ENCODE measurements at regions of chr18 and their contacts with region 1.

Region 1: GRCh38 chr18:4587204-4587603 is 132.1 kb upstream of the DLGAP1 start:
- DNase-seq: no peak

Region 2: DNA sequence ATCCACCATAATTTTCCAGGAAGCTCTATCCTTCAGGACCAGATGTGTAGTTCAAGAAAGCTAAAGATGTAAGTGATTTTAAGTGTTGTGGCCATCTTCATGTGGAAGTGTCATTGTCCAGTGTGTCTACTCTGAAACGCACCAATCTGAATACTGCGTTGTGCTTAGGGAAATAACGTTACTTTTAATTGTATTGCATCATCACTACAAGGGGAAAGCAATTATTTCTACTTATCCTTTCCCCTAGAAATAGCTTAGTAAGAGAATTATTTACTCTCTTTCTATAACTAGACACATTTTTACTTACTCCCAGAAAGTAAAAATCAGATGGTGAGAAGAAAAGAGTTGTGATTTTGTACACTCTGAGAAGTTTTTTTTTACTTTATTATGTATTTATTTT is 29.7 kb before region 1 on chr18:
- intact Hi-C with region 1: loop called in 1 of 2 experiments (anchors 2 kb)
- DNase-seq: no peak